Activated B cell treated with CpG ODN at 0.5 μM for 24 hours (primary cell): ENCODE measurements at regions of chr1 and their contacts with region 1.

Region 1: DNA sequence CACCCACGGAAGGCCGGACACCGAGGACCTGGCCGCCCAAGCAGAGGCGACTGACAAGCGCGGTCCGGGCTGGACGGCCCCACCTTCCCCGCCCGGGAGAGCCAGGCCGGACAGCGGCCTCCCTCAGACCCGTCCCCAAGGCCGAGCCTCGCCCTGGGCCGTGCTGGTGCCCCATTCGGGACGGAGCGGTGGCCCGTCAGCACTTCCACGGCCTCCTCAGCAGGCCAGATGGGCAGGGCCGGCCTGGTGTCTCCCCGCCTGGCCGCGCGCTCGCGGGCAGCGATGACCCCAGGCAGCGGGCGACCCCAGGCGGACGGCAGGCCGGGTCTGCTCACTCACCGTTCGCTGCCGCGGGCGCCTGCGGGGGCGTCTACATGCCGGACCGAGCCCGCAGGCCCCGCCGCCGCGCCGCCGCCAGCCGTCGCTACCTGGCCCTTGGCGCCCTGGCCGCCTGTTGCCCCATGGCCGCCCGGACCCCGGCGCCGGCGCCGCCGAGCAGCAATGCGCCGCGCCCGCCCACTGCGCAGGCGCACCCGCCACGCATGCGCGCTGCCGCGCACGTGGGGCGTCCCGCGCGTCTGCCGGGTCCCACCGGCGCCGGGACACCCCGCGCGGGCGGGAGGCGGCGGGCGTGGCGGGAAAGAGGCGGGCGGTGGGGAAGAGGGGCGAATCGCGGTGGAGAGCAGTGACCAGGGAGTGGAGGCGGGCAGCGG is at the start of gene NADK:
- DNase-seq: peak; percentile 90
- ATAC-seq: peak; percentile 29
- H3K4me3 Mint-ChIP-seq: peak within 1 kb of the TSS; percentile 85
- H3K27ac Mint-ChIP-seq: peak within 1 kb of the TSS; percentile 95
- H3K4me1 Mint-ChIP-seq: peaks cover 76% of the 10 kb centered on the region
- H3K27me3 Mint-ChIP-seq: no peaks in the 10 kb centered on the region
- CTCF ChIP-seq: no peak
- total RNA-seq, gene NADK: 106 and 122 TPM in 2 replicates

Region 2: GRCh38 chr1:1511533-1512285 is 266.4 kb before region 1 on chr1 and contains the start of gene ATAD3A:
- CTCF ChIA-PET with region 1: no interaction called
- POLR2A ChIA-PET with region 1: interaction called, 3 read pairs
- intact Hi-C with region 1: loop called (anchors 5 kb)
- DNase-seq: peak; percentile 87
- ATAC-seq: peak; percentile 92
- H3K4me3 Mint-ChIP-seq: peak within 1 kb of the TSS; percentile 91
- H3K27ac Mint-ChIP-seq: peak within 1 kb of the TSS; percentile 87
- H3K4me1 Mint-ChIP-seq: peaks cover 14% of the 10 kb centered on the region
- H3K27me3 Mint-ChIP-seq: no peaks in the 10 kb centered on the region
- CTCF ChIP-seq: no peak
- total RNA-seq, gene ATAD3A: 26.1 and 32.4 TPM in 2 replicates

Region 3: DNA sequence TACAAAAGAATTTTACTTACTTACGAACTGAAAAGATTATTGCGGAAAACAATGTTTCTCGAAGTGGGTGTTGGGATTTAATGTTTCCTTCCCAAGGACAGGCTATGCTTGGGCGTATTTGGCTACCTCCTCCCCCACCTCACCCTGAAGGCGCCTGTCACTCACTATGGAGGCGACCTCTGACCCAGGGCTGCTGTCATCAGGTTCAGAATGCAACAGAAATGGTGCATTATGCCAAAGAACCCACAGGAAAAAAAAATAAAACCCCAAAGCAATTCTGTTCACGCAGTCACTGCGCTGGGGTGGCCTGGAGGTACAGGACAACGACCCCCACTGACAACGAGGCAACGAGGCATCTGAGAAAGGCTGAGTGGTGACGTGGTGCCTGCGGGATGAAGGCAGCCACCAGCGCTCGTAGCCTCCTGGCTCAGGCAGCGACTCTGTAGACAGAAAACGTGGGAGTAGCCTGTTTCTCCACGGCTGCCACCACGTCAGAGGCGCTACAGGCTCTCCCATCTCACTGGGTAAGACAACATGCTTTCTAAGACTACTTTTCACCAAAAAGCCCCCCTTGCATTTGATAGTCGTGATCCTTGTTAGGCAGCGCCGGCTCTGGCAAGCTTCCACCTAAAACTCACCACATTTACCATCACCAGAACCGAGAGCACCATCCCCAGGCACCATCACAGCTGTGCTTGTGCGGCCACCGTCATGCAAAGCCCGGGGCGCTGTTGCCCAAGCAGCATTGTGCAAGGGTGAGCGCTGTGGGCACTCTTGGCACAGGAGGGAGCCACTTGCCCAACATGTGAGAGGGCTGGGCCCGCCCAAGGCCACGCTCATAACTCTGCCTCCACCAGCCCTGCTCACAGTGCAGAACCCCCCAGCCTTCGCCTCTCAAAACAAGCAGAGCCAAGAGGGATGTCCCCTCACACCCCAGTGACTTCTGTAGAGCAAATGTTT is 14.2 kb before region 1 on chr1:
- CTCF ChIA-PET with region 1: no interaction called
- POLR2A ChIA-PET with region 1: no interaction called
- intact Hi-C with region 1: no loop called
- DNase-seq: no peak
- ATAC-seq: peak; percentile 61
- H3K4me3 Mint-ChIP-seq: no peak overlapping the region
- H3K27ac Mint-ChIP-seq: peak overlapping the region; percentile 26
- H3K4me1 Mint-ChIP-seq: peaks cover 8% of the 10 kb centered on the region
- H3K27me3 Mint-ChIP-seq: no peaks in the 10 kb centered on the region
- CTCF ChIP-seq: no peak

Region 4: GRCh38 chr1:1796466-1796865 is 18.4 kb after region 1 on chr1:
- CTCF ChIA-PET with region 1: no interaction called
- POLR2A ChIA-PET with region 1: interaction called, 5 read pairs
- intact Hi-C with region 1: loop called (anchors 1 kb)
- DNase-seq: no peak
- ATAC-seq: no peak
- H3K4me3 Mint-ChIP-seq: peak overlapping the region; percentile 30
- H3K27ac Mint-ChIP-seq: no peak overlapping the region
- H3K4me1 Mint-ChIP-seq: peaks cover 48% of the 10 kb centered on the region
- H3K27me3 Mint-ChIP-seq: no peaks in the 10 kb centered on the region
- CTCF ChIP-seq: no peak

Region 5: DNA sequence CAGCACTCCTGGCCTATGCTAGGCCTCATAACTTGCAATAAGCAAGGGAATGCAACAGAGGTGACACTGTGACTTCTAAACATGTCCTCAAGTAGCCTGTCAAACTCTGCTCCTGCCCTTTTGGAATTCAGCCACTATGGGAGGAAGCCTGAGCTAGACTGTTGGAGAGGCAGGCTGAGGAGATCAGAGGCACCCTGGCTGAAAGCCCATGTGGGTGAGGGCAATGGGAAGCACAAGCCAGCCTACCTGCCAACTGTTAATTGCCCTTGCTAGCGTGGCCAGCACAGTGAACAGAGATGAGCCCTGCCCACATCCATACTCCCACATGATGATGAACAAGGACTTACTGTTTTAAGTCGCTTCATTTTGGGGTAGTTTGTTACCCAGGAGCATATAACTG is 95.1 kb after region 1 on chr1:
- CTCF ChIA-PET with region 1: no interaction called
- POLR2A ChIA-PET with region 1: interaction called, 13 read pairs
- intact Hi-C with region 1: loop called (anchors 1 kb)
- DNase-seq: no peak
- ATAC-seq: no peak
- H3K4me3 Mint-ChIP-seq: no peak overlapping the region
- H3K27ac Mint-ChIP-seq: no peak overlapping the region
- H3K4me1 Mint-ChIP-seq: peaks cover 77% of the 10 kb centered on the region
- H3K27me3 Mint-ChIP-seq: no peaks in the 10 kb centered on the region
- CTCF ChIP-seq: no peak

Region 6: DNA sequence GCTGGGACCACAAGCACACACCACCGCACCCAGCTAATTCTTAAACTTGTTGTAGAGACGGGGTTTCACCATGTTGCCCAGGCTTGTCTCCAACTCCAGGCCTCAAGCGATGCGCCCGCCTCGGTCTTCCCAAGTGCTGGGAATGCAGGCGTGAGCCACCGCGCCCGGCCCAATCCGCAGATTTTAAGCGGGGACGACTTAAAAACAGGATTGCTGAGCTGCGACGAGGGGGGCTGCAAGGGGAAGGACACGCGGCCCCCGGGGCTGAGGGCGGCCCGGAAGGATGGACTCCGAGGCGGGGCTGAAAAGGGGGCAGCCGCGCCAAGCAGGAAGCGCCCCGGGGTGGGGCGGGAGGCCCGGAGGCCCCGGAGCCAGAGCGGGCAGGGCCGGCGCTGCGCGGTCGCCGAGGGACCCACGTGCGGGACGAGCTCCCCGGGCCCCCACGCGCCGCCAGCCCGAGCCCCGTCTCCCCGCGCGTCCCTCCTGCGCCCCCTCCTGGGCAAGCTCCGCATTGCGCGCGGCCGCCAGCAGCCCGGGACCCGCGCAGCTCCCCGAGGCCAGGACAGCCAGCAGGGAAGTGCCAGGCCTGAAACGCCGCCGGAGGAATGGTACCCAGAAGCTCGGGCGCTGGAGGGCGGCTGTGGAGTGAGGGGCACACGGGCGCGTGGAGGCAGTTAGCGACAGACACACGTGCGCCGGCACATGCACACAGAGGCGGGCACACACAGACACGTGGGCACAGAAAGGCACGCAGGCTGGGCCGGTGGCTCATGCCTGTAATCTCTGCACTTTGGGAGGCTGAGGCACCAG is 266.6 kb after region 1 on chr1:
- CTCF ChIA-PET with region 1: no interaction called
- POLR2A ChIA-PET with region 1: no interaction called
- intact Hi-C with region 1: loop called (anchors 5 kb)
- DNase-seq: peak; percentile 87
- ATAC-seq: peak; percentile 86
- H3K4me3 Mint-ChIP-seq: peak overlapping the region; percentile 46
- H3K27ac Mint-ChIP-seq: no peak overlapping the region
- H3K4me1 Mint-ChIP-seq: peaks cover 21% of the 10 kb centered on the region
- H3K27me3 Mint-ChIP-seq: peaks cover 11% of the 10 kb centered on the region
- CTCF ChIP-seq: peak; percentile 30